Aorta (tissue), 5 donors: ENCODE measurements at regions of chr20 and their contacts with region 1.

Region 1: GRCh38 chr20:23050847-23051631 is 1.6 kb upstream of the THBD start:
- DNase-seq: peak; percentile 92 to 96
- ATAC-seq: peak; percentile 65
- H3K4me3 ChIP-seq: peak overlapping the region; percentile 19 to 41
- H3K27ac ChIP-seq: peak overlapping the region in 1 of 2 donors; percentile 53
- H3K4me1 ChIP-seq: no peaks in the 10 kb centered on the region
- H3K27me3 ChIP-seq: no peaks in the 10 kb centered on the region

Region 2: GRCh38 chr20:22691369-22692118 is 359.5 kb before region 1 on chr20:
- intact Hi-C with region 1: loop called (anchors 5 kb)
- DNase-seq: peak; percentile 87 to 89
- ATAC-seq: peak; percentile 93
- H3K4me3 ChIP-seq: no peak overlapping the region
- H3K27ac ChIP-seq: no peak overlapping the region
- H3K4me1 ChIP-seq: peaks cover 0 to 2% of the 10 kb centered on the region in 2 donors
- H3K27me3 ChIP-seq: no peaks in the 10 kb centered on the region

Region 3: DNA sequence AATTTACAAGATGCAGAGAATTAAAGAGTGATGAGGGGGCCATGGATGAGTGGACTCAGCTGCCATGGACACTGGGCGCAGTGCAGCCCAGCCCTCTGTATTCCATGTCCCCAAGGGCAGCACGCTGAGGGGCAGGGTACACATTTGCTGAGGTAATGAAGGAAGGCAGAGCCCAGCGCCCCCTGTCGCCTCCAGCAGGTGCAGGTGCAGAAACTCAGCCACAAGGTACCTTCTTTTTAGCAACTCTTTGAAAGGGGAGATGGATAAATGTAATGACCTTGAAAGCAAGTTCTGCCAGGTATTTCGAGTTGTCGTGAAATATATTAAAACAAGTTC is 27.9 kb after region 1 on chr20:
- intact Hi-C with region 1: no loop called
- DNase-seq: no peak
- ATAC-seq: no peak
- H3K4me3 ChIP-seq: no peak overlapping the region
- H3K27ac ChIP-seq: no peak overlapping the region
- H3K4me1 ChIP-seq: no peaks in the 10 kb centered on the region
- H3K27me3 ChIP-seq: no peaks in the 10 kb centered on the region

Region 4: DNA sequence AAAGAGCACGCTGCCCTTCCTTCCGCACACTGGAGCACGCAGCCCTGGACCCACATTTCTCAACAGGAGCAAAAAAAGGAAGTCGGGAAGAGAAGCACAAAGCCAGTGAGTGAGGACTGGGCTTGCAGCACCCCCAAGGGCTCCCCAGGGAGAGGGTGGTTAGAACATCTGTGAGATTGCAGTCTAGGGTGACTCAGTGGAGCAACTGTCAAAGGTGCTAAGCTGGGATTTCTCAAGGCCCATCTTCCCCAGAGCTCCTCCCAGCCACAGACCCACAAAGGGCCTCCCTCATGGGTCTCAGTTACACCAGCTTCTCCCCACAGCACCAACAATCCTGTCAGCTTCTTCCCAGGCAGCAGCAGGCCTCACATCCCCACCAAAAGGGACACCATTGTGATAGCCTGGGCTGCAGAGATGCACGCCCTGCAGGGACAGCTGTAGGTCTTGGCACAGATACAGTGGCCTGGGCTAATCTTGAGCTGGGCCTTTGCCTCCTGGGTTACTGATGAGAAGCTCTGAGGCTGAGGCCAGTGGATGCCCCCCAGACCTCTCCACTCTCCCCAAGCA is 74.7 kb after region 1 on chr20:
- intact Hi-C with region 1: no loop called
- DNase-seq: peak; percentile 53 to 76
- ATAC-seq: no peak
- H3K4me3 ChIP-seq: no peak overlapping the region
- H3K27ac ChIP-seq: no peak overlapping the region
- H3K4me1 ChIP-seq: no peaks in the 10 kb centered on the region
- H3K27me3 ChIP-seq: no peaks in the 10 kb centered on the region

Region 5: GRCh38 chr20:23235173-23236027 is 184.4 kb after region 1 on chr20:
- intact Hi-C with region 1: loop called (anchors 2 to 5 kb)
- DNase-seq: peak; percentile 84 to 89
- ATAC-seq: peak; percentile 94
- H3K4me3 ChIP-seq: no peak overlapping the region
- H3K27ac ChIP-seq: no peak overlapping the region
- H3K4me1 ChIP-seq: no peaks in the 10 kb centered on the region
- H3K27me3 ChIP-seq: no peaks in the 10 kb centered on the region

Region 6: DNA sequence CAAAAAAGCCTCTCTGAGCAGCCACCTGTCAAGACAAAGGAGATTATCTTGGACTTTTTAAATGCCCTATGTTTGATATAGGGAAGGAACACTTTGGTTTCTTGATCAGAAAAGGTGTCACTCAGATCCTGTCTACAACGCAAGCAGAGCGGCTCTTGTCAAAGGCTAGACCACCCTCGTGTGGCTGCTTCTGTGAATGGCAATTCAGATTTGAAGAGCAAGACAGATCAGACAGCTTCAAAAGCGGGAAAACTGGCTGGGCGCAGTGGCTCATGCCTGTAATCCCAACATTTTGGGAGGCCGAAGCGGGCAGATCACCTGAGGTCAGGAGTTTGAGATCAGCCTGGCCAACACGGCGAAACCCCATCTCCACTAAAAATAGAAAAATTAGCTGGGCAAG is 289.5 kb after region 1 on chr20:
- intact Hi-C with region 1: loop called in 1 of 2 experiments (anchors 5 kb)
- DNase-seq: peak; percentile 76 to 83
- ATAC-seq: peak; percentile 75
- H3K4me3 ChIP-seq: no peak overlapping the region
- H3K27ac ChIP-seq: no peak overlapping the region
- H3K4me1 ChIP-seq: no peaks in the 10 kb centered on the region
- H3K27me3 ChIP-seq: no peaks in the 10 kb centered on the region